Heart left ventricle (tissue), 16 donors: ENCODE measurements at regions of chr2 and their contacts with region 1.

Region 1: DNA sequence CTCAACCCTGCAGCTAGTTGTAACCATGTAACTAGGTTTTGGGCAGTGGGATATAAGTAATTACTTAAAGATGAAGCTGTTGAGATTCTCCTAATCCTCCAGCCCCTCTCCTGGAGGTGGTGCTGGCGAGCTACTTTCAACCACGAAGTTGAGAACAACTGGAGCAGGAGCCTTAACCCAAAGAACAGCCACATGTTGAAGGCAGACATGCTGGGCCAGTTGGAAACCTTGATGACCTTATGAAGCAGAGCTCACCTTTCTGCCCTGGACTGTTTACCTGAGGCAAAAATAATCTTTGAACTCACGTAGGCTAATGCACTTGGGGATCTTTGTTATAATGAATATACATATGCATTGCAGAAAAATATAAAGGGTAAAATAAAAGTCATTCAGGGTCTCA is 89.6 kb upstream of the NPAS2 start:
- DNase-seq: peak in 4 of 5 donors; percentile 44 to 78 (median 65)
- ATAC-seq: peak; percentile 79 to 84 (median 82)
- H3K4me3 ChIP-seq: no peak overlapping the region
- H3K27ac ChIP-seq: no peak overlapping the region
- H3K4me1 ChIP-seq: peaks cover 0 to 11% (median 3%) of the 10 kb centered on the region in 12 donors
- H3K27me3 ChIP-seq: no peaks in the 10 kb centered on the region
- CTCF ChIP-seq: peak; percentile 58 to 85 (median 70)
- POLR2A ChIP-seq: no peak

Region 2: GRCh38 chr2:100161945-100162620 is 568.3 kb before region 1 on chr2:
- intact Hi-C with region 1: no loop called
- DNase-seq: no peak
- ATAC-seq: no peak
- H3K4me3 ChIP-seq: no peak overlapping the region
- H3K27ac ChIP-seq: no peak overlapping the region
- H3K4me1 ChIP-seq: peaks cover 0 to 6% (median 0%) of the 10 kb centered on the region in 12 donors
- H3K27me3 ChIP-seq: no peaks in the 10 kb centered on the region
- CTCF ChIP-seq: no peak
- POLR2A ChIP-seq: no peak

Region 3: DNA sequence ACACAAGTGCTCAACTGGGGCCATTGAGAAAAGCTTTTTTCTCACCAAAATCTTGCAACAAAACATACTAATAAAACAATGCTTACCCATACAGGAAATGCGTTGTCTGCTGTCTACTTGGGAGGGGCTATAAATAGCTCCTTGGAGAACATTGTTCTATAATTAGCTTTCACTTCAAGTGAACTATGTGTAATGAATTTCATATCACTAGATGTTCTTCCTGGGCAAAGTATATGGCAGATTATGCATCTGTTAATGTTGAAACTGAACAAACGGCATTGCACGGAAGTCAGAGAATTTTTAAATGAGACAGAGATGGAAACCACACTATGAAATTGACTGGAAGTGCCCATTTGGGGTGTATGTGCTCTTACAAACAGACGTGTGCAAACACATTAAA is 83.2 kb after region 1 on chr2:
- intact Hi-C with region 1: loop called in 4 of 10 experiments (anchors 2 to 5 kb)
- DNase-seq: no peak
- ATAC-seq: peak; percentile 59 to 84 (median 69)
- H3K4me3 ChIP-seq: peak overlapping the region in 1 of 12 donors; percentile 2
- H3K27ac ChIP-seq: peak overlapping the region in 11 of 12 donors; percentile 32 to 84 (median 59)
- H3K4me1 ChIP-seq: peaks cover 4 to 58% (median 35%) of the 10 kb centered on the region in 12 donors
- H3K27me3 ChIP-seq: peaks cover 0 to 5% (median 0%) of the 10 kb centered on the region in 9 donors
- CTCF ChIP-seq: no peak
- POLR2A ChIP-seq: no peak

Region 4: DNA sequence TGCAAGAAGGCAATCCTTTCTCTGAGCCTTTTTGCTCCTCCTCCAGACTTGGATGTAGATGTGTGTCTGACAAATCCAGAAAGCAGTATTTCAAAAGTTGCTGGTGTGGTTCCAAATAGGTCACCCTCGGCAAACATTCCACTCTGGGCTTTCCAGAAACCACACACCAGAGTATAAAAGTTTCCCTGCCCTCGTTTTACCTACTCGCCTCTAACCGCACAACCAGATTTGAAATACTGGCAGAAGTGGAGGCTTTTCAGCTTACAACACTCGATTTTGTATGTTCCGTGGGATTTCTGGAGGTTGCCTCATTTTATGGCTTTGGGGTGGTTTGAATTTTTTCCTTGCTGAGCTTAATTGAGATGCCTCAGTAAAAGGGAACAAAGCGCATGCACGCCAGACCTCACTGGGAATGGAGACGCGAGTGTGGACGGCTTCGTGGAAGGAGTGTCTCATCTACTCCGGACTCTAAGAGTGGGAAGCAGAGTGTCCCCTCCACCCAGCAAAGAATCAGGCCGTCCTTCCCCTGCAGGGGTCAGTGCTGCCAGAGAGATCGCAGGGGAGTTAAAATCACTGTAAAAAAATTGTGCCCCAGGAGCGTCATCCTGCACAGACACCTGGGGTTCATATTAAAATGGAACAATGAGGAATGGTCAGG is 227.8 kb after region 1 on chr2:
- intact Hi-C with region 1: loop called in 1 of 10 experiments (anchors 10 kb)
- DNase-seq: peak in 3 of 5 donors; percentile 28 to 40 (median 31)
- ATAC-seq: peak; percentile 52 to 78 (median 70)
- H3K4me3 ChIP-seq: peak overlapping the region in 1 of 12 donors; percentile 16
- H3K27ac ChIP-seq: peak overlapping the region in 3 of 12 donors; percentile 18 to 49 (median 22)
- H3K4me1 ChIP-seq: peaks cover 0 to 38% (median 17%) of the 10 kb centered on the region in 12 donors
- H3K27me3 ChIP-seq: no peaks in the 10 kb centered on the region
- CTCF ChIP-seq: no peak
- POLR2A ChIP-seq: no peak

Region 5: GRCh38 chr2:100984892-100985379 is 254.6 kb after region 1 on chr2:
- intact Hi-C with region 1: loop called (anchors 1 to 2 kb)
- DNase-seq: peak; percentile 76 to 88 (median 79)
- ATAC-seq: peak; percentile 65 to 75 (median 66)
- H3K4me3 ChIP-seq: no peak overlapping the region
- H3K27ac ChIP-seq: peak overlapping the region in 1 of 12 donors; percentile 22
- H3K4me1 ChIP-seq: peaks cover 0 to 12% (median 0%) of the 10 kb centered on the region in 12 donors
- H3K27me3 ChIP-seq: no peaks in the 10 kb centered on the region
- CTCF ChIP-seq: peak; percentile 82 to 97 (median 90)
- POLR2A ChIP-seq: no peak